ENCODE measurements at regions of chr16 and their contacts with region 1.

Region 1: DNA sequence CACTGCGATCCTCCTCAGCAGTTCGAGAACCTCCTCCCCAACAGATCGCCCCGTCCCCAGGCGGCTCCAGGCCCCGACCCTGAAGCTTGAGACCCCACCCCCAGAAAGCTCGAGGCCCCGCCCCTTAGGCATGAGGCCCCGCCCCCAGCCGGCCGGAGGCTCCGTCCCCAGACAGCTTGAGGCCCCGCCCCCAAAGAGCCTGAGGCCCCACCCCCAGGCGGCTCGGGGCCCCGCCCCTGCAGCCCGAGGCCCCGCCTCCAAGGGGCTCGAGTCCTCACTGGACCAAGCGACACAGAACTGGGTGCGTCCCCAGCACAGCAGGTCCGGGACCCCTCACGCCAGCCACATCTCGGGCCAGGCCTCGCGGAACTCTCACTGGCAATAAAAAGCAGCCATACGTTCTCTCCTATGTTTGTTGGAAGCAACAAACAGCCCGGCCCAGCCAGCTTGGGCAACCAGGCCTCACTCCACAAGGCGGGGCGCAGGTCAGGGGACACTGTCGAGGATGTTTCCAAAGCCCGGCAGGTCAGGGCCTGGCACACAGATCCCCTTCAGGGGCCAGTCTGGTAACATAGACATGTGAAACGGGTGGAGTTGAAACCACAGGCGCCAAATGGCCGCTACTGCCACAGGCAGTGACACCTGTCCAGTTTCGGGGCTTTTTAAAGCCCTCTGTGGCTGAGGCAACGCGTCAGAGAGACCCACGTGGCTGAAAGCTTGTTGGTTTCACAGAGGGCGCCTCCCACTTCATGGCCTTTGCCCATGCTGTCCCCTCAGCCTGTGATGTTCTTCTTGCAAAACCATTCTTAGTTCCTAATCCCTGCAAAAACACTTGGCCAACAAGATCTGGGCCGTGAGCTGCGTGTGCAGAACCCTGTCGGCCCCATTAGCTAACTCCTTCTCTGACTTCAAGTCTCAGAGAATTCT is 224.2 kb downstream of the PARN start:
- DNase-seq: peak; percentile 90
- ATAC-seq: peak; percentile 83
- H3K4me3 ChIP-seq: peak overlapping the region; percentile 45 to 68 (median 57); a peak in 5 of 6 replicates
- H3K27ac ChIP-seq: peak overlapping the region; percentile 77
- H3K4me1 ChIP-seq: peaks cover 80% of the 10 kb centered on the region
- H3K27me3 ChIP-seq: no peaks in the 10 kb centered on the region
- CTCF ChIP-seq: peak; percentile 28
- EP300 ChIP-seq: no peak
- POLR2A ChIP-seq: peak; percentile 86 to 95; a peak in 3 of 4 replicates
- RAD21 ChIP-seq: peak; percentile 59

Region 2: GRCh38 chr16:14285513-14286385 is 120.1 kb before region 1 on chr16:
- CTCF ChIA-PET with region 1: no interaction called
- POLR2A ChIA-PET with region 1: interaction called, 13 read pairs
- in situ Hi-C with region 1: no loop called
- intact Hi-C with region 1: no loop called
- DNase-seq: peak; percentile 95
- ATAC-seq: peak; percentile 84
- H3K4me3 ChIP-seq: peak overlapping the region; percentile 77 to 94 (median 89)
- H3K27ac ChIP-seq: peak overlapping the region; percentile 35
- H3K4me1 ChIP-seq: peaks cover 36% of the 10 kb centered on the region
- H3K27me3 ChIP-seq: no peaks in the 10 kb centered on the region; a peak in 1 of 5 replicates
- CTCF ChIP-seq: peak; percentile 34
- EP300 ChIP-seq: peak; percentile 30 to 67; a peak in 3 of 4 replicates
- POLR2A ChIP-seq: no peak
- RAD21 ChIP-seq: peak; percentile 79

Region 3: DNA sequence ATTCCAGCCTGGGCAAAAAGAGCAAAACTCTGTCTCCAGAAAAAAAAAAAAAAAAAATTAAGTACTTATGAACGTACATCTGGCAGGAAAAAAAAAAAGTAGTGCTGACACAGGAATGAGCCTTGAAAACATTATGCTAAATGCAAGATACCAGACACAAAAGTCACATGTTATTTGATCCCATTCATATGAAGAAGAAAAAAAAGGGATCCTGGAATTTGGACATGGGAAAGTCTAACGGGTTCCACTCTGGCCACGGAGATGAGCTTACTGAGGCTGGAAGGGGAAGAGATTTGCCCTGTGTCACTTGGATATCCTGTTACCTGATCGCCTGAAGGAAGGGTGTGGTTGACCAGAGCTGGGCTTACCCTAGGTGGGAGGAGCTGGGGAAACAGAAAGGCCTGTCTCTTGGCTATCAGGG is 27.7 kb before region 1 on chr16:
- CTCF ChIA-PET with region 1: no interaction called
- POLR2A ChIA-PET with region 1: interaction called, 11 read pairs
- in situ Hi-C with region 1: no loop called
- intact Hi-C with region 1: no loop called
- DNase-seq: peak; percentile 52
- ATAC-seq: peak; percentile 51
- H3K4me3 ChIP-seq: 0 out of 6 replicates have a peak overlapping the region, but pooled peaks of 1 of the 3 experiments have one; percentile 25
- H3K27ac ChIP-seq: no peak overlapping the region
- H3K4me1 ChIP-seq: peaks cover 59% of the 10 kb centered on the region
- H3K27me3 ChIP-seq: no peaks in the 10 kb centered on the region
- CTCF ChIP-seq: no peak
- EP300 ChIP-seq: no peak
- POLR2A ChIP-seq: no peak
- RAD21 ChIP-seq: no peak

Region 4: GRCh38 chr16:14420721-14421488 is 15.0 kb after region 1 on chr16:
- CTCF ChIA-PET with region 1: no interaction called
- POLR2A ChIA-PET with region 1: interaction called, 16 read pairs
- in situ Hi-C with region 1: no loop called
- intact Hi-C with region 1: no loop called
- DNase-seq: peak; percentile 76
- ATAC-seq: peak; percentile 94
- H3K4me3 ChIP-seq: peak overlapping the region in 1 of 3 experiments; percentile 42; a peak in 1 of 6 replicates
- H3K27ac ChIP-seq: no peak overlapping the region
- H3K4me1 ChIP-seq: peaks cover 22% of the 10 kb centered on the region
- H3K27me3 ChIP-seq: no peaks in the 10 kb centered on the region
- CTCF ChIP-seq: peak; percentile 26
- EP300 ChIP-seq: no peak; a peak in 1 of 4 replicates
- POLR2A ChIP-seq: no peak
- RAD21 ChIP-seq: no peak

Region 5: GRCh38 chr16:14486520-14487303 is 80.8 kb after region 1 on chr16:
- CTCF ChIA-PET with region 1: no interaction called
- POLR2A ChIA-PET with region 1: interaction called, 19 read pairs
- in situ Hi-C with region 1: no loop called
- intact Hi-C with region 1: loop called (anchors 10 kb)
- DNase-seq: peak; percentile 98
- ATAC-seq: peak; percentile 95
- H3K4me3 ChIP-seq: peak overlapping the region; percentile 44 to 62 (median 49)
- H3K27ac ChIP-seq: peak overlapping the region; percentile 78
- H3K4me1 ChIP-seq: peaks cover 71% of the 10 kb centered on the region
- H3K27me3 ChIP-seq: no peaks in the 10 kb centered on the region
- CTCF ChIP-seq: peak; percentile 30; the same call in 1 of the 2 replicates
- EP300 ChIP-seq: peak in 1 of 2 experiments; percentile 74; a peak in 1 of 4 replicates
- POLR2A ChIP-seq: peak; percentile 58 to 87; a peak in 3 of 4 replicates
- RAD21 ChIP-seq: no peak; the same call in 1 of the 2 replicates

Region 6: DNA sequence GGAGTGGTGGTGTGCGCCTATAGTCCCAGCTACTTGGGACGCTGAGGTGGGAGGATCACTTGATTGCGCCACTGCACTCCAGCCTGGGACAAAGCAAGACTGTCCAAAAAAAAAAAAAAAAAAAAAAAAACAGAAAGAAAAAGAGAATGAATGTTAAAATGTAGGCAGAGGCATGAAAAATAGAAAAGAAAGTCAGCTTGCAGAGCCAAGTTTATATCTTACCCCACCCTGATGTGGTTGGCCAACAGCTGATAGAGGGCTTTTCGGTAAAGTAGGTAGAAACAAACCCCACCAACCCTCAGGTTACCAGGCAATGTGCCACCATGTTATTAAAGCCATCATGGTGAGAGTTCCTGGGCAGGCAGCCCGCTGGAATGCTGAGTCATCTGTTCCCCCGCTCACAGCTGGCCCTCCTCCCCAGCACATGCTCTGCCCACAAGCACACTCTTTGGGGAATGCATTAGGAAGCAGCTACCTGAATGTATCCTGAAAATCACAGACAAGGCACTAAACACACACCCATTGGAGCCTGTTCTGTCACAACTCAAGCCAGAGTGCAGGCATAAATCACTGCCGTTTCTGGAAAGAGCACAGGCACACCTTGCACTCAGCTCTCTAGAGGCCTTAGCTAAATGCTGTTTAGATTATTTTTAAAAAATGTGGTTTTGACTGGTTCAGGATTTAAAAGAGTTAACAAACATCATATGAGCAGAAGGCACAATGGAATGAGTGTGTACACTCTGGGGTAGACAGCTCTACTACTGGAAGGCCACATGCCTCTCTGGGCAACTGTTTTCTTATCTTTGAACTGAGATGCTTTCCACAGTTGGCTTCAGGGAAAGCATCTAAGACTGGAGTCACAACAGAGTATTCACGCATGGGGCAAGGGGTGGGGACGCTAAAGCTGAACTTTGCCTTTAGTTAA is 95.7 kb after region 1 on chr16:
- CTCF ChIA-PET with region 1: no interaction called
- POLR2A ChIA-PET with region 1: interaction called, 12 read pairs
- in situ Hi-C with region 1: no loop called
- intact Hi-C with region 1: no loop called
- DNase-seq: peak; percentile 92
- ATAC-seq: peak; percentile 73
- H3K4me3 ChIP-seq: peak overlapping the region in 2 of 3 experiments; percentile 6 to 40; a peak in 2 of 6 replicates
- H3K27ac ChIP-seq: peak overlapping the region; percentile 75
- H3K4me1 ChIP-seq: peaks cover 99% of the 10 kb centered on the region
- H3K27me3 ChIP-seq: no peaks in the 10 kb centered on the region
- CTCF ChIP-seq: no peak
- EP300 ChIP-seq: peak in 1 of 2 experiments; percentile 70; a peak in 2 of 4 replicates
- POLR2A ChIP-seq: 0 out of 4 replicates have a peak, but pooled peaks of 1 of the 2 experiments have one; percentile 22
- RAD21 ChIP-seq: peak; percentile 16; the same call in 1 of the 2 replicates

Region 7: GRCh38 chr16:14510939-14511799 is 105.3 kb after region 1 on chr16:
- CTCF ChIA-PET with region 1: no interaction called
- POLR2A ChIA-PET with region 1: interaction called, 25 read pairs
- in situ Hi-C with region 1: no loop called
- intact Hi-C with region 1: no loop called
- DNase-seq: peak; percentile 99
- ATAC-seq: peak; percentile 96
- H3K4me3 ChIP-seq: peak overlapping the region in 2 of 3 experiments; percentile 4 to 27; a peak in 2 of 6 replicates
- H3K27ac ChIP-seq: peak overlapping the region; percentile 84
- H3K4me1 ChIP-seq: peaks cover 43% of the 10 kb centered on the region
- H3K27me3 ChIP-seq: no peaks in the 10 kb centered on the region
- CTCF ChIP-seq: no peak
- EP300 ChIP-seq: peak; percentile 97 to 99
- POLR2A ChIP-seq: no peak
- RAD21 ChIP-seq: 0 out of 2 replicates have a peak, but pooled peaks have one; percentile 12

Measured in HepG2 (cell line).